Endothelial cell of umbilical vein (primary cell): ENCODE measurements at regions of chr13 and their contacts with region 1.

Region 1: DNA sequence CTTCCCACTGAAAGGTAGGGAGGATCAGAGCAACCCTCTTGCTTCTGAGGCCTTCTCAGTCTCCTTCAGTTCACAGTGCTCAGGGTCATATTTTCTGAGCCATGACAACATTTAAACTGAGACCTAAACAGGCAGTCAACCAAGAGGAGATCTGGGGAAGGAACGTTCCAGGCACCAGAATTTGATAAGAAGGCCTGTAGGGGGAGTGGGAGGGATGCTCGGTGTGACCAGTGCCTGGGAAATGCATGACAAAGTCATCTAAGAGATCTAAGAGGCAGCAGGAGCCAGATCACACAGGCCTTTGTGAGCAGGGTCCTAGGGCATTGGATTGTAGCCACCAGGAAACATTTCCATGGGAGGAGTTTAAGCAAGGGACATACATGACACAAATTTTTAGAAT is 71.6 kb downstream of the SHISA2 start:
- DNase-seq: peak; percentile 54
- H3K4me3 ChIP-seq: no peak overlapping the region
- H3K27ac ChIP-seq: no peak overlapping the region
- H3K4me1 ChIP-seq: peaks cover 11% of the 10 kb centered on the region
- H3K27me3 ChIP-seq: no peaks in the 10 kb centered on the region
- CTCF ChIP-seq: peak; percentile 52 to 66
- POLR2A ChIP-seq: no peak

Region 2: DNA sequence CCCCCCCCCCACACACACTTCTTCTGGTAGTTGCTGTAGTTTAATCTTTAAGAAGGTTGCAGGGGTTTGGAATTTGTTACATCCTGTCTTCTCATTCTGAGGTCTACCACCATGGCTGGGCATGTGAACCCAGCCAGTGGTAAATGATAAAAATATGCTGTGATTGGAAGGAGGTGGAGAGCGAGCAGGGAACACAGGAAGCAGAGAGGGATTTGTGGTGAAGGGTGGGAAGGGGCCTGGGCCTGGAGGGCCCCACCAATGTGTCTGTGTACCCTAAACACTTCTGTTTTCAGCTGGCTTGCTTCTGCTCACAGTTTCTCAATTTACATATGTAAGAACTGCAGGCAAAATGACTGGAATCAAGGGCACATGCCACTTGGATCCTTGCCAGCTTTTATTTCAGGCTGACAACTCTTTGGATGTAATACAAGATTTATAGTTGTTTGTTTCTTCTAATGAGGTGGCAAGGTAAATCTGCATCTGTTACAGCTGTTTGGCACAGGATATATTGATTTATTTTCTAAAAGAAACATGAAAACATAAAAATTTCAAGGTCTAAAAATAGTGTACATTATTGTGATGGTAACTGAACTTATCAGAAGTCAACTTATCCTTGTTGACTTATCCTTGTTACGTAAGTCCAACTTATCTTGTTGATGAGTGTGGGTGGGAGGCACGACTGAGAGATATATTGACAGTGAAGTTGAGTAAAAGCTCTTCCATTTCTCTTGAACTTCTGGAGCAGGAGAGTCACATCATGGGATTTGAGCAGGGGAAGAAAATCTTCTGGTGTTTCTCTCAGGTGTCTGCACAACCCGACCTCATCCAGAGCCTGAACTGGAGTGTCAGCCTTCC is 241.7 kb before region 1 on chr13:
- CTCF ChIA-PET with region 1: no interaction called
- POLR2A ChIA-PET with region 1: no interaction called
- dilution Hi-C with region 1: no loop called
- intact Hi-C with region 1: no loop called
- DNase-seq: peak; percentile 11
- H3K4me3 ChIP-seq: no peak overlapping the region
- H3K27ac ChIP-seq: no peak overlapping the region
- H3K4me1 ChIP-seq: no peaks in the 10 kb centered on the region
- H3K27me3 ChIP-seq: no peaks in the 10 kb centered on the region
- CTCF ChIP-seq: no peak
- POLR2A ChIP-seq: no peak

Region 3: DNA sequence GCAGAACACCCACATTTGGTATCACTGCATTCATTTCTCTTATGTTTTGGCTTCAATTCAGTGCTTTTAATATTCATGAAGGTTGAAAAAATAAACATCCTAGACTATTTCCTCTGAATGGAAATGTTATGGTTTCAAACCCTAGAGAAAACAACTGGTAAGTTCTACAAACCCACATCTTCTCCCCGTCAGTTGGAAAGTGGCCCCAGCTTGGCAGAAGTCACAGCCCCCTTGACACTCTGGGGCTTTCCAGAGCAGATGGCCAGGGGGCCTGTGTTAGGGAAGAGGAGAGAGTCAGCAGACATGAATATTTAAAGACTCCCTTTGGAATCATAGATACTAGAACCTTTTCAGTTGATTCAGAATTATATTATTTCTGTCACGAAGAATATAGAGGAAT is 52.3 kb before region 1 on chr13:
- CTCF ChIA-PET with region 1: no interaction called
- POLR2A ChIA-PET with region 1: no interaction called
- dilution Hi-C with region 1: no loop called
- intact Hi-C with region 1: no loop called
- DNase-seq: no peak
- H3K4me3 ChIP-seq: no peak overlapping the region
- H3K27ac ChIP-seq: no peak overlapping the region
- H3K4me1 ChIP-seq: no peaks in the 10 kb centered on the region
- H3K27me3 ChIP-seq: peaks cover 5% of the 10 kb centered on the region in 2 experiments
- CTCF ChIP-seq: no peak
- POLR2A ChIP-seq: no peak

Region 4: DNA sequence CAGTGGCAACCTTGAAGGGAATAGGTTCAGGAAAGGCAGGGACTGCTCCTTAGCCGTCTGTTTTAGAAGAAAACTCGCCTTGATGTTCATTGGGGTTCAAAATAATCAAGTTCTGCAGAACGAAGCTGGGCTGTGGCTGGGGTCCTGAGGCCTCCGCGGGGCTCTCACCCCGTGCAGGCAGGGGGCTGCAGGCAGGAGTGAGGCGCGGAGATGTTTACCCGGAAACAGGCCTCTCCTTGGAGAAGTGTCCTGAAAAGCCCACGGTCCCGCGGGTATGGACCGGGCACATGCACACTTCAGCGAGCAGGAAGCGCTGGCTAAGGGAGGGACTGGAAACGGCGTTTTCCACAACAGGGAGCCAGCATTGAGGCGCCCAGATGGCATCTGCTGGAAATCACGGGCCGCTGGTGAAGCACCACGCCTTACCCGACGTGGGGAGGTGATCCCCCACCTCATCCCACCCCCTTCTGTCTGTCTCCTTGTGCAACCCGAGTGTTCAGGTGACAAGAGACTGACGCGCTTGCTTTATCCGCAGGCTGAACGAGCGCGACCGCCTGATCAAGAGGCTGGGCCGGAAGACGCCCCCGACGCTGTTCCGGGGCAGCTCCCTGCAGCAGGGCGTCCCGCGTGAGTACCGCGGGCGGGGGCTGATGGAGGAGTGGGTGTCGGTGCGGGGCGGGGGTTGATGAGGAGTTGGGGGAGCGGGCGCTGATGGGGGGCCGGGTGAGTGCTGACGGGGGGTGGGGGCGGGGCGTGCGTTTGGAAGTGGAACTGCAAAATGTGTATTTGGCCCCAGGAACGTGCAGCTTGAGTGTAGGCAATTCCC is 32.0 kb after region 1 on chr13:
- CTCF ChIA-PET with region 1: interaction called, 3 read pairs
- POLR2A ChIA-PET with region 1: no interaction called
- dilution Hi-C with region 1: no loop called
- intact Hi-C with region 1: loop called (anchors 1 kb)
- DNase-seq: no peak
- H3K4me3 ChIP-seq: peak overlapping the region in 1 of 3 experiments; percentile 19
- H3K27ac ChIP-seq: no peak overlapping the region
- H3K4me1 ChIP-seq: peaks cover 46% of the 10 kb centered on the region
- H3K27me3 ChIP-seq: no peaks in the 10 kb centered on the region
- CTCF ChIP-seq: no peak
- POLR2A ChIP-seq: no peak

Region 5: DNA sequence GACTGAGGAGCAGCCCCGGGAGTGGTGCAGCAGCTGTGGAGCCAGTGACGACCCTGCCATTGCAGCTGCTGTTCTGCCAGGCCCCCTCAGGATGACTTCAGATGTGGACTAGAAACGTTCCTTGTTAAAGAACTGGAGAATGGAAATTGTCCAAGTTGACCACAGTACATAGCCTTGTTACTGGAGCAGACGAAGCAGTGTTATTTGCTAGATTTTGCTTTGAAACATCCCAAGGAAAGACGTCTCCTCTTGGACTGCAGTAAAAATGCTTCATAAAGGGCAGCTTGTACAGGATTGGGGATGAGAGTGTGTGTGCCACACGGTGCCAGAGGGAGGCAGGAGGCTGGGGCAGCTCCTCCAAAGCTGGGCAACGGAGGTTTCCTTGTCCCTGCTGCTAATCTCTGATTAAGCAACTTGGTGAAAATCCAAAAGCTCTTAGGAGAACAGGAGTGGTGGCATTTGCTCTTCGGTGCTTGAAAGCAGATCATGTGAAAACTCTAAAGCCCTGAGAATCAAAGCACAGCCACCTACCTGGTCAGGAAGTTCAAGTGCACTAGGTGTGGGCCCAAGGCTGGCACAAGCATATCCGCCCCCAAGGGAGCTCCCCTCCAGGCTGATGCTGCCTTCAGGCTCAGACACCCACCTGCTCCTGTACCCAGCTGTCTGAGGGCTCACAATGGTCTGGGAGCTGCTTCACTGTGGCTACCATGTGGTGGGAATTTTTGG is 37.1 kb after region 1 on chr13:
- CTCF ChIA-PET with region 1: interaction called, 3 read pairs
- POLR2A ChIA-PET with region 1: no interaction called
- dilution Hi-C with region 1: no loop called
- intact Hi-C with region 1: loop called (anchors 1 kb)
- DNase-seq: no peak
- H3K4me3 ChIP-seq: no peak overlapping the region
- H3K27ac ChIP-seq: peak overlapping the region; percentile 89
- H3K4me1 ChIP-seq: peaks cover 81% of the 10 kb centered on the region
- H3K27me3 ChIP-seq: no peaks in the 10 kb centered on the region
- CTCF ChIP-seq: no peak
- POLR2A ChIP-seq: no peak

Region 6: GRCh38 chr13:26046639-26047038 is 66.4 kb after region 1 on chr13:
- CTCF ChIA-PET with region 1: interaction called, 7 read pairs
- POLR2A ChIA-PET with region 1: interaction called, 3 read pairs
- dilution Hi-C with region 1: no loop called
- intact Hi-C with region 1: loop called (anchors 1 kb)
- DNase-seq: no peak
- H3K4me3 ChIP-seq: no peak overlapping the region
- H3K27ac ChIP-seq: no peak overlapping the region
- H3K4me1 ChIP-seq: peaks cover 19% of the 10 kb centered on the region
- H3K27me3 ChIP-seq: peaks cover 0 to 3% of the 10 kb centered on the region in 2 experiments
- CTCF ChIP-seq: no peak
- POLR2A ChIP-seq: no peak

Region 7: GRCh38 chr13:26051657-26052311 is 71.5 kb after region 1 on chr13 and contains the start of gene SHISA2:
- CTCF ChIA-PET with region 1: interaction called, 7 read pairs
- POLR2A ChIA-PET with region 1: interaction called, 3 read pairs
- dilution Hi-C with region 1: no loop called
- intact Hi-C with region 1: loop called (anchors 1 kb)
- DNase-seq: peak; percentile 69
- H3K4me3 ChIP-seq: peak within 1 kb of the TSS; percentile 42 to 89 (median 50)
- H3K27ac ChIP-seq: no peak within 1 kb of the TSS
- H3K4me1 ChIP-seq: peaks cover 19% of the 10 kb centered on the region
- H3K27me3 ChIP-seq: peaks cover 10% of the 10 kb centered on the region in 2 experiments
- CTCF ChIP-seq: no peak
- POLR2A ChIP-seq: peak; percentile 92
- total RNA-seq, gene SHISA2: 2.5 and 4.7 TPM in 2 replicates

Region 8: GRCh38 chr13:26062844-26063444 is 82.7 kb after region 1 on chr13:
- CTCF ChIA-PET with region 1: interaction called, 9 read pairs
- POLR2A ChIA-PET with region 1: no interaction called
- dilution Hi-C with region 1: no loop called
- intact Hi-C with region 1: loop called (anchors 1 kb)
- DNase-seq: peak; percentile 64
- H3K4me3 ChIP-seq: no peak overlapping the region
- H3K27ac ChIP-seq: no peak overlapping the region
- H3K4me1 ChIP-seq: peaks cover 5% of the 10 kb centered on the region
- H3K27me3 ChIP-seq: peaks cover 0 to 2% of the 10 kb centered on the region in 2 experiments
- CTCF ChIP-seq: peak; percentile 57 to 63
- POLR2A ChIP-seq: no peak

Region 9: DNA sequence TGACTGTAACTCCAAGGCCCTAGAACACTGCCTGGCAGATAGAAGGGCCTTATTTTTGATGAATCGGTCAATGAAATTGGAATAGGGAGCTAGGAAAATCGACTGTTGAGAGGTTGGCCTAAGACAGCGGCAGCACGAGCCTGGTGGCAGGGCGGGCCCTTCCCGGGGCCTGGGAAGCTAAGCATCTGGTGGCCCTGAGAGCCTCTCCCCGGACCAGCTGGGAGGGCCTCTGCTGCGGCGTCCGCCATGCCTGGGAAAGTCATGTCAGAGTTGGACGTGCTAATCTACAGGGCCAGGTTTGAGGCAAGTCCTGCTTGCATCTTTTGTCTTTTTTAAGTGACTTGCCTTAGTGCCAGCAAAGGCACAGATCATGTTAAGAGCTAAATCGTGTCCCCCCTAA is 791.5 kb after region 1 on chr13:
- CTCF ChIA-PET with region 1: no interaction called
- POLR2A ChIA-PET with region 1: no interaction called
- dilution Hi-C with region 1: no loop called
- intact Hi-C with region 1: no loop called
- DNase-seq: no peak
- H3K4me3 ChIP-seq: no peak overlapping the region
- H3K27ac ChIP-seq: no peak overlapping the region
- H3K4me1 ChIP-seq: no peaks in the 10 kb centered on the region
- H3K27me3 ChIP-seq: no peaks in the 10 kb centered on the region
- CTCF ChIP-seq: no peak
- POLR2A ChIP-seq: no peak